HEK293 (cell line): ENCODE measurements at regions of chr7 and their contacts with region 1.

Region 1: GRCh38 chr7:134432296-134433152 is 26.4 kb downstream of the AKR1B1 start:
- H3K4me3 ChIP-seq: peak overlapping the region; percentile 37
- H3K27ac ChIP-seq: no peak overlapping the region; the same call in 1 of the 2 replicates
- H3K4me1 ChIP-seq: no peaks in the 10 kb centered on the region
- CTCF ChIP-seq: peak; percentile 94

Region 2: GRCh38 chr7:134403677-134404076 is 28.8 kb before region 1 on chr7:
- CTCF ChIA-PET with region 1: no interaction called
- POLR2A ChIA-PET with region 1: no interaction called
- H3K4me3 ChIP-seq: no peak overlapping the region
- H3K27ac ChIP-seq: no peak overlapping the region
- H3K4me1 ChIP-seq: no peaks in the 10 kb centered on the region
- CTCF ChIP-seq: no peak

Region 3: GRCh38 chr7:134444198-134444871 is 11.8 kb after region 1 on chr7:
- CTCF ChIA-PET with region 1: interaction called, 25 read pairs
- POLR2A ChIA-PET with region 1: no interaction called
- H3K4me3 ChIP-seq: no peak overlapping the region
- H3K27ac ChIP-seq: no peak overlapping the region
- H3K4me1 ChIP-seq: no peaks in the 10 kb centered on the region
- CTCF ChIP-seq: no peak

Region 4: GRCh38 chr7:134505856-134506255 is 73.3 kb after region 1 on chr7:
- CTCF ChIA-PET with region 1: interaction called, 167 read pairs
- POLR2A ChIA-PET with region 1: no interaction called
- H3K4me3 ChIP-seq: no peak overlapping the region
- H3K27ac ChIP-seq: no peak overlapping the region
- H3K4me1 ChIP-seq: no peaks in the 10 kb centered on the region
- CTCF ChIP-seq: no peak

Region 5: DNA sequence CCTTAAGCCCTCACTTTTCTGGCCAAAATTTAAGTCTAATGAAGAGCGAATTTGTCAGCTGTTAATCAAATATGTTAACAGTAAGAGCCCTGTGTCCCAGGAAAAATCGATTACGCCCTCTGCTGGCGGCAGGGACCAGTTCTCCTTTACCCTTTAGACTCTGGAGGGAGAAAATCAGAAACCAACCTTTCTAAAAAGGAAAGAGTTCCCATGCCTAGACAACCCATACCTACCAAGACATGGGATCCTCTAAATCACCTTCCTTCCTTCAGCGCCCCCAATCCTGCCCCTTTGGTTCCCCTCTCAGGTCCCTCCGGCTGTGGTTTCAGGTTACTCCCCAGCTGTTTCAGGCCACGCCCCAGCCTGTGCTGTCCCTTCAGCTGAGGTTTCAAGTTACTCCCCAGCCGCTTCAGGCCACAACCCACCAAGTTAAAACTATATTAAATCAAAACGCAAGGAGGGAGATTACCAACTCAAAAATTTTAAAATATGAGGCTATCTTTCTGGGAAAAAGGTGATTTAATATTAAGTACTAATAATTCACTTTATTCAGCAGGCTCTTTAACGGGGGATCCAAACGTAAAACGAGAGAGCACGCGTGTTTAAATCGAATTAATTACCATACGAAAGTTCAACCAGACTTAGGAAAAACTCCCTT is 115.0 kb after region 1 on chr7:
- CTCF ChIA-PET with region 1: interaction called, 67 read pairs
- POLR2A ChIA-PET with region 1: no interaction called
- H3K4me3 ChIP-seq: peak overlapping the region; percentile 30
- H3K27ac ChIP-seq: no peak overlapping the region
- H3K4me1 ChIP-seq: no peaks in the 10 kb centered on the region
- CTCF ChIP-seq: peak; percentile 69

Region 6: GRCh38 chr7:134599371-134599770 is 166.8 kb after region 1 on chr7:
- CTCF ChIA-PET with region 1: interaction called, 17 read pairs
- POLR2A ChIA-PET with region 1: no interaction called
- H3K4me3 ChIP-seq: no peak overlapping the region
- H3K27ac ChIP-seq: no peak overlapping the region
- H3K4me1 ChIP-seq: no peaks in the 10 kb centered on the region
- CTCF ChIP-seq: no peak

Region 7: GRCh38 chr7:134612196-134612595 is 179.7 kb after region 1 on chr7:
- CTCF ChIA-PET with region 1: interaction called, 58 read pairs
- POLR2A ChIA-PET with region 1: no interaction called
- H3K4me3 ChIP-seq: no peak overlapping the region
- H3K27ac ChIP-seq: no peak overlapping the region
- H3K4me1 ChIP-seq: no peaks in the 10 kb centered on the region
- CTCF ChIP-seq: no peak